Caco-2 (cell line): ENCODE measurements at regions of chr6 and their contacts with region 1.

Region 1: DNA sequence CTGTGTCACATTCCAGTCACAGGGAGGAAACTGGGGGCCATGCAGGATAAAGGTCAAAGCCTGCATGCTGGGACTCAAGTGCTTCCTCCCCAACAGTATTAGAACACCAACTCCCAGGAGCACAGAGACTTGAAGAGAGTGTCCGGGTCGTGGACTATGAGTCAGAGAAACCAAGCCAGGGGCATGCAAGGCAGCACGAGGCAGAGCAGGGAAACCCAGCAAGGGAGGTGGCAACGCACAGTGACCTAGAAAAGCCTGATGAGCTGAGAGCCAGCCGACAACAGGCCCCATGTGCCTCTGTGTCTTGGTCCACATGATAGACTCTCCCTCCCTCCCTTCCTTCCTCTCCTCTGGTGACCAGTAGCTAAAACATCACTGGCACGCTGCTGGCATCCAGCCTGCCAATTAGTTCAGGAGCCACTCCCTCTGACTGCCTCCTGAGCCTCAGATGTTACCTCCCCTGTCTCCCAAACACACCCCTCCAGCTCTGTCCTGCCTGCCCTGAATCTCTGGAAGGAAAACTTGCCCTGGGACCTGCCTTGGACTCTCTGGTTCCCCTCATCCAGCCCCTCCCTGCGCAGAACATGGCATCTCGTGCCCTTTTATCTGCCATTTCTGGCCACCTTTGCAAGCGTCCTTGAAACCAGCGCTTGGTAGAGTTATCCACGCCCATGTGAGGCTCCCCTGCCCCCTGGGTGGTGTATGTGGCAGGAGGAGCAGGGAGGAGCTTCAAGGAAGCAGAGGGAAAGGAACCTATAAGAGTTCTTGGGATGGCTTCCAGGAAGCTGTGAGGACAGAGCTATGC is 16.2 kb upstream of the RNF39 start:
- DNase-seq: no peak
- H3K4me3 ChIP-seq: no peak overlapping the region
- H3K4me3 Mint-ChIP-seq: no peak overlapping the region
- H3K27ac Mint-ChIP-seq: no peak overlapping the region
- H3K4me1 ChIP-seq: peaks cover 17% of the 10 kb centered on the region
- H3K4me1 Mint-ChIP-seq: peaks cover 6% of the 10 kb centered on the region
- H3K27me3 ChIP-seq: no peaks in the 10 kb centered on the region
- H3K27me3 Mint-ChIP-seq: peaks cover 13% of the 10 kb centered on the region
- CTCF ChIP-seq: no peak

Region 2: GRCh38 chr6:30116724-30117123 is 24.9 kb after region 1 on chr6:
- CTCF ChIA-PET with region 1: interaction called, 11 read pairs
- POLR2A ChIA-PET with region 1: no interaction called
- intact Hi-C with region 1: no loop called
- DNase-seq: no peak
- H3K4me3 ChIP-seq: no peak overlapping the region
- H3K4me3 Mint-ChIP-seq: no peak overlapping the region
- H3K27ac Mint-ChIP-seq: no peak overlapping the region
- H3K4me1 ChIP-seq: peaks cover 37% of the 10 kb centered on the region
- H3K4me1 Mint-ChIP-seq: peaks cover 35% of the 10 kb centered on the region
- H3K27me3 ChIP-seq: no peaks in the 10 kb centered on the region
- H3K27me3 Mint-ChIP-seq: no peaks in the 10 kb centered on the region
- CTCF ChIP-seq: no peak

Region 3: GRCh38 chr6:30150671-30151395 is 59.1 kb after region 1 on chr6:
- CTCF ChIA-PET with region 1: no interaction called
- POLR2A ChIA-PET with region 1: no interaction called
- intact Hi-C with region 1: no loop called
- DNase-seq: no peak
- H3K4me3 ChIP-seq: no peak overlapping the region
- H3K4me3 Mint-ChIP-seq: no peak overlapping the region
- H3K27ac Mint-ChIP-seq: no peak overlapping the region
- H3K4me1 ChIP-seq: no peaks in the 10 kb centered on the region; the same call in 1 of the 2 replicates
- H3K4me1 Mint-ChIP-seq: no peaks in the 10 kb centered on the region
- H3K27me3 ChIP-seq: no peaks in the 10 kb centered on the region
- H3K27me3 Mint-ChIP-seq: no peaks in the 10 kb centered on the region
- CTCF ChIP-seq: no peak